Sigmoid colon (tissue), 7 donors: ENCODE measurements at regions of chr2 and their contacts with region 1.

Region 1: GRCh38 chr2:175684457-175684856 is 317.6 kb downstream of the LNPK start:
- DNase-seq: no peak
- H3K4me3 ChIP-seq: no peak overlapping the region
- H3K27ac ChIP-seq: no peak overlapping the region
- H3K4me1 ChIP-seq: no peaks in the 10 kb centered on the region
- H3K27me3 ChIP-seq: no peaks in the 10 kb centered on the region
- CTCF ChIP-seq: no peak
- EP300 ChIP-seq: no peak
- POLR2A ChIP-seq: no peak

Region 2: DNA sequence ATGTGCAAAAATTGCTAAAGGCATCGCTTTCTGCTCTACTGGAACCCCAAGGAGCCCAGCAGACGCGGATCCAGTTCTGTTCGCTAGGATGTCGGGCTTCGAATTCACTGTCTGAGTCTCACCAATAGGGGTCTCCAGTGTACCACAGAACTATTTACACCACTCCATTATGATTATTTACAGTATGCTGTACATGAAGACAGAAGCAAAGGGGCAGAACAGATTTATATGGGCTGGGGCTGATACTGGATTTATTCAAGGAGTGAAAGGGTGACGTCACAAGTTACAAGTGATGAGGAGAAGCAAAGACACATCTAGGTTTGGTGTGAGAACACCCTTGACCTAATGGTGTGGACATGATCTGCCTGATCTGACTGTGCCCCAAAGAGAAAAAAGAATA is 317.6 kb before region 1 on chr2:
- intact Hi-C with region 1: loop called (anchors 10 kb)
- DNase-seq: no peak
- H3K4me3 ChIP-seq: no peak overlapping the region
- H3K27ac ChIP-seq: no peak overlapping the region
- H3K4me1 ChIP-seq: no peaks in the 10 kb centered on the region
- H3K27me3 ChIP-seq: peaks cover 0 to 3% (median 0%) of the 10 kb centered on the region in 3 donors
- CTCF ChIP-seq: peak; percentile 19 to 76 (median 68)
- EP300 ChIP-seq: no peak
- POLR2A ChIP-seq: no peak

Region 3: GRCh38 chr2:175640655-175641054 is 43.8 kb before region 1 on chr2:
- intact Hi-C with region 1: no loop called
- DNase-seq: no peak
- H3K4me3 ChIP-seq: no peak overlapping the region
- H3K27ac ChIP-seq: no peak overlapping the region
- H3K4me1 ChIP-seq: no peaks in the 10 kb centered on the region
- H3K27me3 ChIP-seq: no peaks in the 10 kb centered on the region
- CTCF ChIP-seq: no peak
- EP300 ChIP-seq: no peak
- POLR2A ChIP-seq: no peak

Region 4: GRCh38 chr2:175742367-175742766 is 57.9 kb after region 1 on chr2:
- intact Hi-C with region 1: no loop called
- DNase-seq: no peak
- H3K4me3 ChIP-seq: no peak overlapping the region
- H3K27ac ChIP-seq: no peak overlapping the region
- H3K4me1 ChIP-seq: peaks cover 0 to 6% (median 2%) of the 10 kb centered on the region in 4 donors
- H3K27me3 ChIP-seq: no peaks in the 10 kb centered on the region
- CTCF ChIP-seq: no peak
- EP300 ChIP-seq: no peak
- POLR2A ChIP-seq: no peak

Region 5: DNA sequence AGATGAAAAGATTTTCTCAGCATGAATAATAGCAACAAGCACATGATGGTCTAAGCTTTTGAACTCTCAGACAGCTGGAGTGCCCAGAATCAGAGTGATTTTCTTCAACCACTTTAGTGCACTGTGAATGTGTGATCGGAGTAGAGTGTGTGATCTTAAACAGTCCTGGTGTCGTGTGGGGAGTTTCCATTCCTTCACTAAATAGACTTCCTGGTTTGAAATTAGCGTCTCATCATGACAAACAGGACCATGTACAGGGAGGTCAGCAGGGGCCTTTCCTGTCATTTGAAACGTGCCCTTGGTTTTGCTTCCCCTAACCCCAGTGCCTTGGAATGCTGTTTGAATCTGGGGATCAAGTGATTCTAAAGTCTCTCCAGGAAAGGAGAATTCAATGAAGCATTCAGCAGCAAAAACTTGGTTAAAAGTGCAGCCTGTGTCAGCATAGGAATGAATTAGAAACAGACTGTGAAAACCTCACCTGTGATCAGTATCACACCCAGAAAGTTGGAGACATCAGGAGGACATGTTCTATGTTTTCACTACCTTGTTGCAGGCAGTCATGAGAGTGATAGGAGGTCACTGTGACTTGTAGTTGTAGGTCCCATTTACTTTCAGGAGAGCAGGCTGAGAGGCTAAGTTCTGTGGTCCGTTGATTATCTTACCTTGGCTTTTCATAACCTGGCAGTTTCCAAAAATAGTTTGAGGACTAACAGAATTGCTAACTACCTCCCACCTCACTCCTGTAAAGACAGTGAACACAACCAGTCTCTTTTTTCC is 985.1 kb after region 1 on chr2:
- intact Hi-C with region 1: no loop called
- DNase-seq: no peak
- H3K4me3 ChIP-seq: no peak overlapping the region
- H3K27ac ChIP-seq: peak overlapping the region in 2 of 4 donors; percentile 14 to 35
- H3K4me1 ChIP-seq: peaks cover 0 to 13% (median 8%) of the 10 kb centered on the region in 4 donors
- H3K27me3 ChIP-seq: no peaks in the 10 kb centered on the region
- CTCF ChIP-seq: no peak
- EP300 ChIP-seq: no peak
- POLR2A ChIP-seq: no peak